Activated CD4-positive, alpha-beta T cell treated with anti-CD3 and anti-CD28 coated beads for 36 hours (primary cell): ENCODE measurements at regions of chr22 and their contacts with region 1.

Region 1: DNA sequence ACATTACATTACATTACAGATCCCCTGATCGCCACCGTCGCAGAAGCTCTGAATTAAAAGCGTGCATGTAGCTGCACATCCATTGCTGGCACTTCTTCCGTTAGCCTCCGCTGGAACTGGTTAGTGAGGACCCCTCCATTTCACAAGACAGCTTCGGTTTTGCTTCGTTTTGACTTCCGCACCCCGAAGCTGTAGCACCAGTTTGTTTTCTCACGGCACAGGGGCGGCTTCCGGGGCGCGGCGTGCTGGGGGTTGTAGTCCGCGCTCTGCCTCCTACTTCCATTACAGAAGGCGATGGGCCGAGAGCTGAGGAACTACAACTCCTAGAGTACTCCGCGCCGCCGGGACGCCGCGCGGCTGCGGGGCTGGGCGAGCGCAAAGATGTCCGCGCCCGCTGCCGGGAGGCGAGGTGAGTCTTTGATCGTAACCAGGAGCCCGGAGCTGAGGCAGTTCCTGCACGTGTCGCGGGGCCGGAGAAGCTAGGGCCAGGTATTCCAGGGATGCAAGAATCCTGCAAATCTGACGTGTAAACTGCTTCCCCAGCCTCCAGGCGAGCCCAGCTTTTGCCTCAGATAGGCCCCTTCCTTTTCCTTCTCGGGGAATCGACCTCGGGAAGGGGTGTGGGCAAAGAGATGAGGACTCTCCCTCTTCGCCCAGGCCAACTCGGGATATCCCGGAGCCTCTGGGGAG is at the start of gene PEX26:
- DNase-seq: peak; percentile 97
- ATAC-seq: peak; percentile 98
- H3K4me3 Mint-ChIP-seq: peak within 1 kb of the TSS; percentile 89
- H3K27ac Mint-ChIP-seq: peak within 1 kb of the TSS; percentile 98
- H3K4me1 Mint-ChIP-seq: peaks cover 46% of the 10 kb centered on the region
- H3K27me3 Mint-ChIP-seq: no peaks in the 10 kb centered on the region
- total RNA-seq, gene PEX26: 50.7 to 58.0 TPM

Region 2: DNA sequence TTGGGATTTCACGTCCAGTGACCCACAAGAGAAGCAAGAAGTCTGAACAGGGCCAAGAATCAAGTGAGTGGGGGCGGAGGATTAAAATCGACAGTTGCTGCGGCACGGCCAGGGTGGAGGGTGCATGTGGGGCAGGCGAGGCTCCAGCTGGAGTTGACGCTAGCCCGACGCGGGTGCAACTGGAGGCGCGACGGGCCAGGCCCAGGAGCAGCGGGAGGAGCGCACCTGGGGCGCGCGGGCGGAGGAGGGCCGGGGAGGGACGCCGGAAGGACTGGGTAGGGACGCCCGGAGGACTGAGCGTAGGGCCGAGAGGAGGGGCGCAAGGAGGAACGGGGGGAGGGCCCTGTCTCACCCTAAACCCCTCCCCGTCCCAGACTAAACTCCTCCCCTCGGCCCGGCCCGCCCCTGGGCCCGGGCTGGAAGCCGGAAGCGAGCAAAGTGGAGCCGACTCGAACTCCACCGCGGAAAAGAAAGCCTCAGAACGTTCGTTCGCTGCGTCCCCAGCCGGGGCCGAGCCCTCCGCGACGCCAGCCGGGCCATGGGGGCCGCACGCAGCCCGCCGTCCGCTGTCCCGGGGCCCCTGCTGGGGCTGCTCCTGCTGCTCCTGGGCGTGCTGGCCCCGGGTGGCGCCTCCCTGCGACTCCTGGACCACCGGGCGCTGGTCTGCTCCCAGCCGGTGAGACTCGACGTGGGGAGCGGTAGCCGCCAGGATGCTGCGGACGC is 993.1 kb before region 1 on chr22 and contains the start of gene IL17RA:
- CTCF ChIA-PET with region 1: no interaction called
- POLR2A ChIA-PET with region 1: no interaction called
- intact Hi-C with region 1: loop called in 1 of 2 experiments (anchors 2 kb)
- DNase-seq: peak; percentile 96
- ATAC-seq: peak; percentile 96
- H3K4me3 Mint-ChIP-seq: peak within 1 kb of the TSS; percentile 80
- H3K27ac Mint-ChIP-seq: peak within 1 kb of the TSS; percentile 79
- H3K4me1 Mint-ChIP-seq: peaks cover 46% of the 10 kb centered on the region
- H3K27me3 Mint-ChIP-seq: no peaks in the 10 kb centered on the region
- total RNA-seq, gene IL17RA: 13.1 to 13.3 TPM

Region 3: DNA sequence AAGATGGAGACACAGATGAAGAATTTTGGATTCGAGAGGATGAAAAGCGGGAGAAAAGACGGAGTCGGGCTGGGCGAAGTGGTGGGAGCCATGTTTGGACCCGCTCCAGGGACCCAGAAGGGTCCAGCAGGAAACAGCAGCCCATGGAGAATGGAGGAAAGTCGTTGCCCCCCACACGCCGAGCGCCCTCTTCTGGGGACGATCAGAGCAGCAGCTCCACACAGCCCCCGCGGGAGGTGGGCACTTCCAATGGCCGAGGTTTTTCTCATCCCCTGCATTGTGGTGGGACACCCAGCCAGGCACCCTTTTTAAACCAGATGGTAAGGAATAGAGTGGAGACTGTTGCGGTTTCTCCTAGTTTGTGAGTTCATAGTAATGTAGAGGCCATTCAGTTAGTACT is 537.3 kb before region 1 on chr22:
- CTCF ChIA-PET with region 1: no interaction called
- POLR2A ChIA-PET with region 1: no interaction called
- intact Hi-C with region 1: no loop called
- DNase-seq: peak; percentile 6
- ATAC-seq: no peak
- H3K4me3 Mint-ChIP-seq: no peak overlapping the region
- H3K27ac Mint-ChIP-seq: no peak overlapping the region
- H3K4me1 Mint-ChIP-seq: no peaks in the 10 kb centered on the region
- H3K27me3 Mint-ChIP-seq: no peaks in the 10 kb centered on the region

Region 4: DNA sequence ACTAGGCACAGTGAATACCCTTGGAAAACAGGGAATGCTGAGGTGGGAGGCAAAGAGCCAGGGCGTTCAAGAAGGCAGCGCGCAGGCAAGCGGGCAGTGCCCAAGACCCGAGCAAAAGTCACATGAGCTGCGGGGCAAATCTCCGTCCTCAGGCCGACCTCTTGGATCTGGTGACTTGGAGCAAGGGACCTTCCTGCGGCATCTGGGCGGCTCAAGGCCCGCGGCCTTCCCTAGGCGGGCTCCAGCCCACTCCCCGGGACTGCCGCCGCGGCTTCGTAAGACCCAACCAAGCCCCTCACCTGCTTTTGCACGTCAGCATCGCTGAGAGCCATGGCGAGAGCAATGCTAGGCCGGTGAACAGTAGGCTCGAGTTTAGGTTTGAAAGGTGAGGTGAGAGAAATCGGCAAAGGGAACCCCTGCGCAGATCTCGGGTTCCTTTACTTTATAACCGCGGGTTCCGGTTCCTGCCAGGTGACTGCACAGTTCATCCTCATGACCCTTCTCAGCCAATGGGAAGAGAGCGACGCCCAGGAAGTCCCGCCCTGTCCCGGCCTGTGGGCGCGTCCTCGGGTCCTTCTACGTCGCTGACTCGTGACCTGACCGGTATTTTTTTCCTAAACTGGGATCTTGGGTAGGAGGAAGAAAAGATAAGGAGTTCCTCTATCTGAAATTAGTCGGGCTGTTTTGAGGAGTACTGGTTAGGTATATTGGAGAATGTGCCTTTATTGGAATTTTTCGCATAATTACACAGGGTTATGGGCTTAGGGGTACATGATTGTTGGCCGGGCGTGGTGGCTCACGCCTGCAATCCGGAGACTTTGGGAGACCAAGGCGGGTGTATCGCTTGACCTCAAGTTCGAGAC is 449.2 kb before region 1 on chr22 and contains the start of gene ATP6V1E1:
- CTCF ChIA-PET with region 1: no interaction called
- POLR2A ChIA-PET with region 1: no interaction called
- intact Hi-C with region 1: loop called in 1 of 2 experiments (anchors 1 kb)
- DNase-seq: peak; percentile 96
- ATAC-seq: peak; percentile 100
- H3K4me3 Mint-ChIP-seq: peak within 1 kb of the TSS; percentile 95
- H3K27ac Mint-ChIP-seq: peak within 1 kb of the TSS; percentile 93
- H3K4me1 Mint-ChIP-seq: peaks cover 19% of the 10 kb centered on the region
- H3K27me3 Mint-ChIP-seq: no peaks in the 10 kb centered on the region
- total RNA-seq, gene ATP6V1E1: 83.5 to 95.6 TPM

Region 5: GRCh38 chr22:17767233-17768065 is 310.3 kb before region 1 on chr22:
- CTCF ChIA-PET with region 1: interaction called, 9 read pairs
- POLR2A ChIA-PET with region 1: no interaction called
- intact Hi-C with region 1: loop called (anchors 1 to 2 kb)
- DNase-seq: peak; percentile 78
- ATAC-seq: peak; percentile 86
- H3K4me3 Mint-ChIP-seq: peak overlapping the region; percentile 50
- H3K27ac Mint-ChIP-seq: peak overlapping the region; percentile 55
- H3K4me1 Mint-ChIP-seq: peaks cover 54% of the 10 kb centered on the region
- H3K27me3 Mint-ChIP-seq: peaks cover 7% of the 10 kb centered on the region

Region 6: GRCh38 chr22:17878186-17878694 is 199.5 kb before region 1 on chr22:
- CTCF ChIA-PET with region 1: no interaction called
- POLR2A ChIA-PET with region 1: no interaction called
- intact Hi-C with region 1: no loop called
- DNase-seq: no peak
- ATAC-seq: no peak
- H3K4me3 Mint-ChIP-seq: no peak overlapping the region
- H3K27ac Mint-ChIP-seq: no peak overlapping the region
- H3K4me1 Mint-ChIP-seq: no peaks in the 10 kb centered on the region
- H3K27me3 Mint-ChIP-seq: no peaks in the 10 kb centered on the region

Region 7: DNA sequence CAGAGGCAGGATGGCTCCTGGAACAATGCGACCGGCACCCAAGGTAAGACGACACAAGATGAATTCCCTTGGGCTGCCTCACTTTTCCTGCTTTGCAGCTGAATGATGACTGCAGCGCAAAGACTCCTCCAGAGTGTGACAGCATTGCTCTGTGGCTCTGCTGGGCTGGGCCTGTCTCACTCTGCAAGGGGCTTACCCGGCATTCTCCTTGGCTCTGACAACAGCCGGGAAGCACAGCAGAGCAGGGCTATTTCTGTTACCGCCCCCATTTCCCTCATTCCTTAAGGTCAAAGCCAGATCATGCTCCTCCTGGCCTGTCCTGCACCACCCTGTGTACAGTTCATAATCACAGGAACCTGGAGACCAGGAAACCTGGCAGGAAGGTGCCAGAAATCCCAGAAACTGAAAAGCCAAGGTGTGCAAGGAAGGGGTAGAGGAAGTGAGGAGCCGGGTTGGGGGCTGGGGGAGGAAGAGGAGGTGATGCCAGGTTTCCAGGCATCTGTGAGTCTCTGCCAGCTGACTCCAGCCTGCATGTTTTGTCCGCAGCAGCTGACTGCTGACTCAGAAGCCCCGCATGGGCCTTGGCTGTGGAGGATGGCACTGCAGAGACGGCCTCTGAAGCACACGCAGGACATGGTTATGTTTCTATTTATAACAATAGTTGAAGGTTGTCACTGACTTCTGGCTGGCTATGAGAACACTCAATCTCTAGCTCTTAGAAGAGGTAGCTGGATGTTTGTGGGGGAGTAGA is 167.0 kb before region 1 on chr22:
- CTCF ChIA-PET with region 1: no interaction called
- POLR2A ChIA-PET with region 1: no interaction called
- intact Hi-C with region 1: no loop called
- DNase-seq: peak; percentile 7
- ATAC-seq: no peak
- H3K4me3 Mint-ChIP-seq: no peak overlapping the region
- H3K27ac Mint-ChIP-seq: no peak overlapping the region
- H3K4me1 Mint-ChIP-seq: peaks cover 2% of the 10 kb centered on the region
- H3K27me3 Mint-ChIP-seq: no peaks in the 10 kb centered on the region

Region 8: DNA sequence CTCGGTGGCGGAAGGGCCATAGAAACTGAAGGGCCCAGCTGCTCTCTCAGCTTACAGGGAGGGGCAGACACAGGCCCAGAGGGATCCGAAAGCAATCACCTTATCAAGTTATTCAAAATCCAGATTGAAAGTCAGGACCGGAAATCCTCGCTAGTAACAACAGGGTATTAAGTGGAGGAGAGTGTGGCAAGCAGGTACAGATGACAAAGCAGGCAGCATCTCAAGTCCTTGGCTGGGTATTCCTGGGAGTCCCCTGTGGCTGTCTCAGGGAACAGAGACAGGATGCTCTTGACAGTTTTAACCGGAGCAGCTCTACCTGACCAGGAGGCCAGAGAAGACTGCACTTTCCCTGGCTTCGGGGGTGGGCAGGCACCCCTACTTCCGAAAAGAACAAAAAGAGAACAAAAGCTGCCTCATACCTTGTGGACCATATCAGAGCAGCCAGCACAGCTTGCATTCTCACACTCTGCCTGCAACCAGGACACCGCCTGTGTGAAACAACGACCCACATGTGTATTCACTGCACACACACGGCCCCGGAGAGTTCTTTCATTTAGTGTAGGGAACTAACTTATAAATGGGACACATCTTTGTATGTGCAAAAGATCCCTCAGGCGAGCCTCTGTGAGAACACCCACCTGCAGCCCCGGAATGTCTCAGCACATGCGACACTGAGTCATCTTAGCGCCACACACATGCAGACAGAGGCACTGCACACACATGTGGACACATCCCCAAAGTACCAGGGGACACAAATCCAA is 131.7 kb before region 1 on chr22:
- CTCF ChIA-PET with region 1: no interaction called
- POLR2A ChIA-PET with region 1: no interaction called
- intact Hi-C with region 1: no loop called
- DNase-seq: no peak
- ATAC-seq: no peak
- H3K4me3 Mint-ChIP-seq: no peak overlapping the region
- H3K27ac Mint-ChIP-seq: no peak overlapping the region
- H3K4me1 Mint-ChIP-seq: no peaks in the 10 kb centered on the region
- H3K27me3 Mint-ChIP-seq: no peaks in the 10 kb centered on the region

Region 9: DNA sequence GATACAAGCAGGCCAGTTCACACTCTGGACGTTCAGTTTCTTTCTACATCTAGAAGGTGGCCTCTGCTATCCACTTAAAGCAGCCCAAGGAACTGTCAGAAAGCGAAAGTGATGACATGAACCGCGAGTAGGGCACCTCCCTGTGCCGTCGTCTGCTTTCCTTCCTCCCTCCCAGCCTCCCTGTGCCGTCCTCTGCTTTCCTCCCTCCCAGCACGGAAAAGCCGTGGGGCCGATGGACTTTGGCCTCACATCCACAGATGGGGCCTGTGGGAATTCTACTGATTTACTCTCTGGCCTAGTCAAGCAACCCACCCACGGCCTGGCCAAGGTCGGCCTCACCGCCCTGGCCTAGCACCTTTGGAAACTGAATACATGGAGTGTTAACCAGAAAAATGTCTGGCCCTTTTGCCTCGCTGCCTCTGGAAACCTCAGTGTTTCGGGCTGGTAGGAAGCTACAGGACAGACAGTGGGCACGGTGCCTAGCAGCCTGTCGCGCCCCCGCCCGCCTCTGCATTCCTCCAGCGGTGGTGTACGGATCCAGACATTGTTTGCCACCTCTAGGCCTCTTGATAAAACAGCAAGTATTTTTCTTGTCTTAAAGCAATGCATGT is 14.2 kb after region 1 on chr22:
- CTCF ChIA-PET with region 1: interaction called, 37 read pairs
- POLR2A ChIA-PET with region 1: interaction called, 7 read pairs
- intact Hi-C with region 1: no loop called
- DNase-seq: peak; percentile 59
- ATAC-seq: peak; percentile 61
- H3K4me3 Mint-ChIP-seq: peak overlapping the region; percentile 57
- H3K27ac Mint-ChIP-seq: peak overlapping the region; percentile 80
- H3K4me1 Mint-ChIP-seq: peaks cover 65% of the 10 kb centered on the region
- H3K27me3 Mint-ChIP-seq: no peaks in the 10 kb centered on the region

Region 10: GRCh38 chr22:18152519-18152918 is 74.7 kb after region 1 on chr22:
- CTCF ChIA-PET with region 1: interaction called, 8 read pairs
- POLR2A ChIA-PET with region 1: interaction called, 6 read pairs
- intact Hi-C with region 1: loop called (anchors 1 to 5 kb)
- DNase-seq: peak; percentile 62
- ATAC-seq: peak; percentile 52
- H3K4me3 Mint-ChIP-seq: peak overlapping the region; percentile 73
- H3K27ac Mint-ChIP-seq: peak overlapping the region; percentile 73
- H3K4me1 Mint-ChIP-seq: peaks cover 35% of the 10 kb centered on the region
- H3K27me3 Mint-ChIP-seq: no peaks in the 10 kb centered on the region